A549 (cell line): ENCODE measurements at regions of chr7 and their contacts with region 1.

Region 1: DNA sequence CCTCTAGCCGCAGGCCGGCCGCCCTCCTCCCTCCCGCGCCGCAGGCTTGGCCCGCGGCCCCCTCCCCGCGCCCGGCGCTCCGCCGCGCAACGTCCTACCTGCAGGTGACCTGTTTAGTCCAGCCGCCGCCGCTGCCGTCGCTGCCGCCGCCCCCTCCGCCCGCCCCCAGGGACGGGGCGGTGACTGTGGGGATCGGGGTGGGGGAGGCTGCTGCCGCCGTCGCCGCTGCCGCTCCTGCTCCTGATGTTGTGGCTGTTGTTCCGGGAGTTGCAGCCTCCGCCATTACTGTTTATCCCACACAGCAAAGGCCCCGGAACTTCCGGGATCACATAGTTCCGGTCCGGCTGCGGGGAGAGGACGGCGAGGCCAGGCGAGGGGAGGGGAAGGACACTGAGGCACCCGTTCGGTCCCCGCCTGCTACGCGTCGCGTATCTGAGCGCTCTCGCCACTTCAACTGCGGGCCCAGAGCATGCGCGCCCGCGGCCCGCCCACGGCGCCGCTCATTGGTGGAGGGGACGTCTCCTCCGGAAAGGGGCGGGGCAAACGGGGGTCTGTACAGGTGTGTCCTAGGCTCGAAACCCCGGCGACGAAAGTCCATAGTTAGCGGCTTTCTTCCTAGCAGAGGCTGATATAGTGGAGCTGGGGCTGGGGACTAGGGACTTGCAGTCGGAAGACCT is at the start of gene MKRN1:
- DNase-seq: peak; percentile 91 to 95
- ATAC-seq: peak; percentile 97 to 98
- H3K4me3 ChIP-seq: peak within 1 kb of the TSS; percentile 82
- H3K27ac ChIP-seq: peak within 1 kb of the TSS; percentile 89 to 95
- H3K4me1 ChIP-seq: peaks cover 13% of the 10 kb centered on the region; the same call in 2 of the 3 replicates
- CTCF ChIP-seq: no peak
- EP300 ChIP-seq: no peak
- POLR2A ChIP-seq: peak; percentile 47
- RAD21 ChIP-seq: no peak
- polyA plus RNA-seq, gene MKRN1: 65.1 and 68.8 TPM in 2 replicates

Region 2: GRCh38 chr7:140326116-140326928 is 152.9 kb before region 1 on chr7:
- CTCF ChIA-PET with region 1: no interaction called
- POLR2A ChIA-PET with region 1: no interaction called
- DNase-seq: peak; percentile 67 to 79
- ATAC-seq: peak; percentile 95
- H3K4me3 ChIP-seq: no peak overlapping the region
- H3K27ac ChIP-seq: 0 out of 6 replicates have a peak overlapping the region, but pooled peaks of 1 of the 2 experiments have one; percentile 52
- H3K4me1 ChIP-seq: no peaks in the 10 kb centered on the region
- CTCF ChIP-seq: peak; percentile 90
- EP300 ChIP-seq: no peak
- POLR2A ChIP-seq: no peak
- RAD21 ChIP-seq: peak; percentile 95 to 96

Region 3: GRCh38 chr7:140494867-140495266 is 15.7 kb after region 1 on chr7:
- CTCF ChIA-PET with region 1: interaction called, 44 read pairs
- POLR2A ChIA-PET with region 1: interaction called, 4 read pairs
- DNase-seq: no peak
- ATAC-seq: no peak
- H3K4me3 ChIP-seq: no peak overlapping the region
- H3K27ac ChIP-seq: no peak overlapping the region
- H3K4me1 ChIP-seq: no peaks in the 10 kb centered on the region
- CTCF ChIP-seq: no peak
- EP300 ChIP-seq: no peak
- POLR2A ChIP-seq: no peak
- RAD21 ChIP-seq: no peak

Region 4: GRCh38 chr7:140696680-140697446 is 217.7 kb after region 1 on chr7 and contains the start of gene NDUFB2:
- CTCF ChIA-PET with region 1: no interaction called
- POLR2A ChIA-PET with region 1: no interaction called
- DNase-seq: peak; percentile 84 to 91
- ATAC-seq: peak; percentile 95
- H3K4me3 ChIP-seq: peak within 1 kb of the TSS; percentile 77
- H3K27ac ChIP-seq: peak within 1 kb of the TSS; percentile 93 to 94
- H3K4me1 ChIP-seq: peaks cover 15% of the 10 kb centered on the region; the same call in 2 of the 3 replicates
- CTCF ChIP-seq: no peak
- EP300 ChIP-seq: no peak
- POLR2A ChIP-seq: peak; percentile 81
- RAD21 ChIP-seq: no peak
- polyA plus RNA-seq, gene NDUFB2: 381 and 405 TPM in 2 replicates

Region 5: DNA sequence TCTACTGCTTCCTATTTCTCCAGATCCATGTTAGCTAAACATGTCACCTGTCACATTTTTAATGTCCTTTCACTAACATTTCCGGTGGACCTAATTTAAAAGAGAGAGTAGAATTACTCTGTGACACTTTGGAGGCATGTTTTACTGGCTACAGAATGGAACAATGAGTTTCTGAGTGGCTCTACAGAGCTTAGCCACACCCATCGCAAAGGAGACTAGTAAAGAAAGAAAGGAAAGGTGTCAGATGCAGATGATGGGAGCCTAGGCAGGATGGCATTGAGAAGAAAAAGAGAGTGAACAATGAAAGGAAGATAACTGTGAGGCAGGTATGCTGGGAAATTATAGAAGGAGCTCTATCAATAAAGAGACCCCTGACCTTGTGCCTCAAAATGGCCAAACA is 253.2 kb after region 1 on chr7:
- CTCF ChIA-PET with region 1: no interaction called
- POLR2A ChIA-PET with region 1: no interaction called
- DNase-seq: no peak
- ATAC-seq: no peak
- H3K4me3 ChIP-seq: no peak overlapping the region
- H3K27ac ChIP-seq: no peak overlapping the region
- H3K4me1 ChIP-seq: no peaks in the 10 kb centered on the region
- CTCF ChIP-seq: no peak
- EP300 ChIP-seq: no peak
- POLR2A ChIP-seq: no peak
- RAD21 ChIP-seq: no peak